GM12878 (cell line): ENCODE measurements at regions of chrX and their contacts with region 1.

Region 1: GRCh38 chrX:50100188-50100587 is 100.6 kb downstream of the AKAP4 start:
- DNase-seq: no peak
- ATAC-seq: peak; percentile 64
- H3K4me3 ChIP-seq: no peak overlapping the region
- H3K27ac ChIP-seq: no peak overlapping the region
- H3K4me1 ChIP-seq: no peaks in the 10 kb centered on the region
- H3K27me3 ChIP-seq: no peaks in the 10 kb centered on the region
- CTCF ChIP-seq: peak in 1 of 3 experiments; percentile 23; a peak in 2 of 6 replicates
- EP300 ChIP-seq: no peak
- POLR2A ChIP-seq: no peak
- RAD21 ChIP-seq: peak; percentile 56

Region 2: DNA sequence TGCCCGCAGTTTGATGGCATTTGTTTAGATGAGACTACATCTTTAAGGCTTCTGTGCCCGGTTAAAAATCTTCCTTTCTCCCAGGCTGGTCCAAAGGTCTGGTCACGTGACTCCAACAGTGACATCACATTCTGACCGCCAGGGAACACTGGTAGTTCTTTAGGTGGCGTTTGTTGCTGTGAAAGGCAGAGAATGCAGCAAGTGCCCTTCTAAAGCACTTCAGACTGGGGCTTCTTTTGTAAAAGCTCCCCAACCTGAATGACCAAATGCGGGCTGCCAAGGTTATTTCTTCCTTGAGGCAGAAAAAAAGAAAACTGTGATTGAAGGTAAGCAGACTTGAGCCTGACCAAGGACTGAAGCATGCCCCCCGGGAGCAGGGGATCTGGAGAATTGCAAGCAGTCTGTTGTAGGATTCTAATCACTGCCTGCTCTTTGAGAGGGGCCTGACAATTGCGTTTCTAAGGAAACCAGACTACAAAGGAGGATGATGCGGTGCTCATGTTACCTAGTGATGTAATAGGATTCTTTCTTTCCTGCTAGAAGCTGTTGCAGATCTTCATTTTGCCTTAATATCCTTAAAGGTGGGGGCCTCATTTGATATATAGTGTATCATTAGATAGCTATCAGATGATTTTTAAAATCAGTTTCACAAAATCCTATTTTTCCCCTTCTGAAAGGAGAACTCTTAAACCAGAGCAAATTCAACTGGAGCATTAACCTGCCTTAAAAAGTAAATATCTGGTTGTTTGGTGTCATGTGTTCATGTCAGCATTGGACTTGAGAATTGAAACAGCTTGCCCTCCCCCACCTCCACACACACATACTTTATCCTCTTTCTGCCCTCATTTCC is 32.5 kb before region 1 on chrX:
- CTCF ChIA-PET with region 1: no interaction called
- POLR2A ChIA-PET with region 1: no interaction called
- RAD21 ChIA-PET with region 1: no interaction called
- SMC1A ChIA-PET with region 1: no interaction called
- in situ Hi-C with region 1: no loop called
- intact Hi-C with region 1: no loop called
- DNase-seq: no peak
- ATAC-seq: no peak
- H3K4me3 ChIP-seq: no peak overlapping the region
- H3K27ac ChIP-seq: no peak overlapping the region
- H3K4me1 ChIP-seq: no peaks in the 10 kb centered on the region
- H3K27me3 ChIP-seq: no peaks in the 10 kb centered on the region
- CTCF ChIP-seq: no peak
- EP300 ChIP-seq: no peak
- POLR2A ChIP-seq: no peak
- RAD21 ChIP-seq: no peak

Region 3: DNA sequence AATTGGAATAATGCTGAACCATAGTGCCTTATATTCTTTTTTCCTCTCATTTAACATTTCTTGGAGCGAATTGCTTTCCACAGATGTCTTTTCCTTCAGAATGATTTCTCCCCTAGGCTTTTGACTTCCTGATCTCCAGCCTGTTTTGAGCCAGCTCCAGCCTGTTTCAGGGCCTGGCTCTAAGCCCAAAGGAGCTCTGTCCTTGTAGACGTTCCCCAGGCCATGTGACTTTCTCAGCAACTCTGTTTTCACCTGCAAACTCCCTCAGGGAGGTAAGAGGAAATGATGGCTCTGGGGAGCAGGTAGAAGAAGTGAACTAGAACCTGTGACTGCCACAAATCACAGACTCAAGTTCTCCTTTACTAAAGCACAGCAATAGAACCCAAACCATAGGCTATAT is 11.6 kb after region 1 on chrX:
- CTCF ChIA-PET with region 1: interaction called, 4 read pairs
- POLR2A ChIA-PET with region 1: no interaction called
- RAD21 ChIA-PET with region 1: interaction called, 3 read pairs
- SMC1A ChIA-PET with region 1: interaction called, 14 read pairs
- in situ Hi-C with region 1: no loop called
- intact Hi-C with region 1: no loop called
- DNase-seq: no peak
- ATAC-seq: no peak
- H3K4me3 ChIP-seq: no peak overlapping the region
- H3K27ac ChIP-seq: no peak overlapping the region
- H3K4me1 ChIP-seq: no peaks in the 10 kb centered on the region
- H3K27me3 ChIP-seq: no peaks in the 10 kb centered on the region
- CTCF ChIP-seq: no peak
- EP300 ChIP-seq: no peak
- POLR2A ChIP-seq: no peak
- RAD21 ChIP-seq: no peak

Region 4: GRCh38 chrX:50168241-50168687 is 68.1 kb after region 1 on chrX:
- CTCF ChIA-PET with region 1: no interaction called
- POLR2A ChIA-PET with region 1: no interaction called
- RAD21 ChIA-PET with region 1: no interaction called
- SMC1A ChIA-PET with region 1: no interaction called
- in situ Hi-C with region 1: no loop called
- intact Hi-C with region 1: no loop called
- DNase-seq: no peak
- ATAC-seq: peak; percentile 66
- H3K4me3 ChIP-seq: no peak overlapping the region
- H3K27ac ChIP-seq: no peak overlapping the region
- H3K4me1 ChIP-seq: no peaks in the 10 kb centered on the region; the same call in 1 of the 2 replicates
- H3K27me3 ChIP-seq: no peaks in the 10 kb centered on the region
- CTCF ChIP-seq: no peak
- EP300 ChIP-seq: no peak
- POLR2A ChIP-seq: no peak
- RAD21 ChIP-seq: no peak

Region 5: DNA sequence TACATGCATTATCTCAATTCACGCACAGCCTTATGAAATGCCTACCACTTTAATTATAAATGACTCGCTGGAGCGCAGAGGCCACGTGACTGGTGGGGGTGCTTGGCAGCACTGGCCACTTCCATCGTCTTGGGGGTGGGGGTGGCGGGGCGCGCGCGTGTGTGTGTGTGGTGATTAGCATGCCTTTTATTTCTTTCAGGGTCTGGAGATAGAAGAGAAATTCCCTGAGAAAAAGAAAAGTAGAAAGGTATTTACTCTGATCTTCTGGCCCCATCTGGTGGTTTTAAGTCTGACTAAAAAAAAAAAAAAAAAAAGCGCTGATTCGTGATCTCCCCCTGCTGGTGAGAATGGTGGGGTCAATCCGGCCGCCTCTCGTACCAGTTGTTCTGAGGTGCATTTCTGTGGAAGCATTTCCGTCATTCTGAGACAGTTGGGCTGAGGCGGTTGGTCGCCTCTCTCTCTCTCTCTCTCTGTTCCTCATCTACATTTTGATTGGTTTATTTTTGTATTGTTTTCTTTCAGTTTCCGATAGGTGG is 104.2 kb after region 1 on chrX and contains the start of gene CCNB3:
- CTCF ChIA-PET with region 1: interaction called, 3 read pairs
- POLR2A ChIA-PET with region 1: no interaction called
- RAD21 ChIA-PET with region 1: interaction called, 3 read pairs
- SMC1A ChIA-PET with region 1: interaction called, 3 read pairs
- in situ Hi-C with region 1: no loop called
- intact Hi-C with region 1: loop called (anchors 1 kb)
- DNase-seq: peak; percentile 36
- ATAC-seq: peak; percentile 100
- H3K4me3 ChIP-seq: no peak within 1 kb of the TSS; the same call in 1 of the 2 replicates
- H3K27ac ChIP-seq: no peak within 1 kb of the TSS; the same call in 1 of the 2 replicates
- H3K4me1 ChIP-seq: no peaks in the 10 kb centered on the region; the same call in 1 of the 2 replicates
- H3K27me3 ChIP-seq: no peaks in the 10 kb centered on the region
- CTCF ChIP-seq: peak; percentile 61 to 72 (median 71)
- EP300 ChIP-seq: 0 out of 4 replicates have a peak, but pooled peaks of 1 of the 2 experiments have one; percentile 15
- POLR2A ChIP-seq: no peak
- RAD21 ChIP-seq: peak; percentile 51
- polyA plus RNA-seq, gene CCNB3: 0.16 TPM in 1 of 2 experiments, not detected in the other